ENCODE measurements at regions of chr5 and their contacts with region 1.

Region 1: GRCh38 chr5:43680286-43680685 is 77.3 kb downstream of the NNT start:
- DNase-seq: no peak
- ATAC-seq: no peak
- H3K4me3 ChIP-seq: no peak overlapping the region
- H3K27ac ChIP-seq: peak overlapping the region in 3 of 4 donors; percentile 8 to 34 (median 25)
- H3K4me1 ChIP-seq: peaks cover 18 to 43% of the 10 kb centered on the region in 2 donors
- H3K27me3 ChIP-seq: no peaks in the 10 kb centered on the region
- CTCF ChIP-seq: no peak
- POLR2A ChIP-seq: no peak

Region 2: DNA sequence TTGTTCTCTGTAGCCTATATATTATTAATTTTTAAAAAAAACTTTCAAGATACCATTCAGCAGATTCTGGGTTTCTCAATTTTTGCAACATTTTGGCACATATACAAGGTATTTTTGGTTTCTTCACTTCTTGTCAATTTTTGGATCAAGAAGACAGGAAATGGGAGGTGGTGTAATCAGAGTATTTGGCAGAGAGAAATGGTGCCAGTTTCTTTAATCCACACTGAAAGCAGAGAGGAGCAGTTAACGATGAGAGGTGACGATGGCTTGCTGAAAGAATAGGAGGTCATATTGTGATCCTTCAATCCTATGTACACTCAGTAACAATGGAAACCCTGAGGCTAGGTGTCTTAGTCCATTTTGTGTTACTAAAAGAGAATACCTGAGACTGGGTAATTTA is 60.9 kb before region 1 on chr5:
- in situ Hi-C with region 1: no loop called
- intact Hi-C with region 1: no loop called
- DNase-seq: no peak
- ATAC-seq: peak in 1 of 2 donors; percentile 22
- H3K4me3 ChIP-seq: no peak overlapping the region
- H3K27ac ChIP-seq: peak overlapping the region; percentile 71 to 90 (median 81)
- H3K4me1 ChIP-seq: peaks cover 24 to 54% of the 10 kb centered on the region in 2 donors
- H3K27me3 ChIP-seq: no peaks in the 10 kb centered on the region
- CTCF ChIP-seq: no peak
- POLR2A ChIP-seq: no peak

Region 3: GRCh38 chr5:43631182-43631910 is 48.9 kb before region 1 on chr5:
- in situ Hi-C with region 1: no loop called
- intact Hi-C with region 1: loop called (anchors 5 kb)
- DNase-seq: peak; percentile 54 to 77
- ATAC-seq: peak; percentile 88 to 93
- H3K4me3 ChIP-seq: no peak overlapping the region
- H3K27ac ChIP-seq: peak overlapping the region; percentile 69 to 79 (median 76)
- H3K4me1 ChIP-seq: peaks cover 42 to 58% of the 10 kb centered on the region in 2 donors
- H3K27me3 ChIP-seq: no peaks in the 10 kb centered on the region
- CTCF ChIP-seq: peak; percentile 50 to 75 (median 61)
- POLR2A ChIP-seq: no peak

Region 4: GRCh38 chr5:43854697-43855292 is 174.5 kb after region 1 on chr5:
- in situ Hi-C with region 1: no loop called
- intact Hi-C with region 1: no loop called
- DNase-seq: no peak
- ATAC-seq: no peak
- H3K4me3 ChIP-seq: no peak overlapping the region
- H3K27ac ChIP-seq: no peak overlapping the region
- H3K4me1 ChIP-seq: no peaks in the 10 kb centered on the region
- H3K27me3 ChIP-seq: no peaks in the 10 kb centered on the region
- CTCF ChIP-seq: no peak
- POLR2A ChIP-seq: no peak